ENCODE measurements at regions of chr2 and their contacts with region 1.

Region 1: DNA sequence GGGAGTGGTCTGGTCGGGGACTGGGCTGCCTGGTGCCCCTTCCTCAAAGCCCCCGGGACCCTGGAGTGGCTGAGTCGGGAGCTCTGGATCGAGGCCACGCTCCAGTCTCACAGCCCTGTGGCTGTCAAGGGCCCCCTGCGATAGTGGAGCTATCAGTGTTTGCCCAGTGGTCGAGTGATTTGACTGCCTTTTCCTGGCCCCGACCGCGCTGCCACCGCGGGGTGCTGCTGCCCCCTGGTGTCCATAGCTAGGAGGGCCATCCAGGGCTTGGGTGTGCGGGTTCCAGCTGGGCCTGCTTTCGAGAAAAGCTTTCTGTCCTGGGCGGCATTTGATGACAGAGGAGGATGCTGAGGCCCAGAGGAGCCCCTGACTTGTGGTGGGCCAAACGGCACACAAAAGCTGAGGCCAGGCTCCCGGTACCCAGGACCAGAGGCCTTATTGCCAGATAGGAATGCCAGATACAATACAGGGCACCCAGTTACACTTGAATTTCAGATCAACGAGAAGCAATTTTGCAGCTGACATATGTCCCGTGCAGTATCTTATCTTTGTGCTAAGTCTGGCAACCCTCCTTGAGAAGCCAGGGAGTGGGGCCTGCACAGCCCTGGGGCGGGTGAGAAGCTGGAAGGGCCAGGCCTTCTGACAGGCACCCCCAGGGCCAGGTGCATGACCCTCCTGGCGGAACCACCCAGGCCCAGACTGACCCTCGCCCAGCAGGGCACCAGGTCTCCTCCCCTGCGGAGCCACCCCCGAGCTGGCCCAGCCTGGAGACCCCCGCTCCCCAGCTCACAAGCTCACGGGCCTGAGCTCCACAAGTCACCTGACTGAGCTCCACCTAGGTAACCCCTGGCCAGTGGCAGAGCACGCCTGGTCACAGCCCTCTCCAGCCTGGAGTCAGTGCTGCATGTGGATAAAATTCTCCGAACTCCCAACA is 13.0 kb downstream of the ODC1 start:
- DNase-seq: peak; percentile 78
- ATAC-seq: peak; percentile 87
- H3K4me3 Mint-ChIP-seq: no peak overlapping the region
- H3K27ac Mint-ChIP-seq: no peak overlapping the region
- H3K4me1 Mint-ChIP-seq: peaks cover 15% of the 10 kb centered on the region
- H3K27me3 Mint-ChIP-seq: peaks cover 4% of the 10 kb centered on the region
- CTCF ChIP-seq: peak; percentile 45

Region 2: GRCh38 chr2:9984217-9984739 is 450.9 kb before region 1 on chr2:
- CTCF ChIA-PET with region 1: interaction called, 10 read pairs
- POLR2A ChIA-PET with region 1: no interaction called
- intact Hi-C with region 1: no loop called
- DNase-seq: no peak
- ATAC-seq: peak; percentile 86
- H3K4me3 Mint-ChIP-seq: no peak overlapping the region
- H3K27ac Mint-ChIP-seq: no peak overlapping the region
- H3K4me1 Mint-ChIP-seq: peaks cover 6% of the 10 kb centered on the region
- H3K27me3 Mint-ChIP-seq: peaks cover 16% of the 10 kb centered on the region
- CTCF ChIP-seq: no peak

Region 3: GRCh38 chr2:10097352-10098148 is 337.6 kb before region 1 on chr2:
- CTCF ChIA-PET with region 1: interaction called, 11 read pairs
- POLR2A ChIA-PET with region 1: no interaction called
- intact Hi-C with region 1: no loop called
- DNase-seq: peak; percentile 25
- ATAC-seq: peak; percentile 81
- H3K4me3 Mint-ChIP-seq: no peak overlapping the region
- H3K27ac Mint-ChIP-seq: no peak overlapping the region
- H3K4me1 Mint-ChIP-seq: peaks cover 2% of the 10 kb centered on the region
- H3K27me3 Mint-ChIP-seq: peaks cover 14% of the 10 kb centered on the region
- CTCF ChIP-seq: peak; percentile 16

Region 4: GRCh38 chr2:10141736-10142642 is 293.2 kb before region 1 on chr2:
- CTCF ChIA-PET with region 1: interaction called, 39 read pairs
- POLR2A ChIA-PET with region 1: interaction called, 4 read pairs
- intact Hi-C with region 1: loop called (anchors 1 kb)
- DNase-seq: peak; percentile 28
- ATAC-seq: peak; percentile 84
- H3K4me3 Mint-ChIP-seq: no peak overlapping the region
- H3K27ac Mint-ChIP-seq: no peak overlapping the region
- H3K4me1 Mint-ChIP-seq: no peaks in the 10 kb centered on the region
- H3K27me3 Mint-ChIP-seq: no peaks in the 10 kb centered on the region
- CTCF ChIP-seq: no peak

Region 5: DNA sequence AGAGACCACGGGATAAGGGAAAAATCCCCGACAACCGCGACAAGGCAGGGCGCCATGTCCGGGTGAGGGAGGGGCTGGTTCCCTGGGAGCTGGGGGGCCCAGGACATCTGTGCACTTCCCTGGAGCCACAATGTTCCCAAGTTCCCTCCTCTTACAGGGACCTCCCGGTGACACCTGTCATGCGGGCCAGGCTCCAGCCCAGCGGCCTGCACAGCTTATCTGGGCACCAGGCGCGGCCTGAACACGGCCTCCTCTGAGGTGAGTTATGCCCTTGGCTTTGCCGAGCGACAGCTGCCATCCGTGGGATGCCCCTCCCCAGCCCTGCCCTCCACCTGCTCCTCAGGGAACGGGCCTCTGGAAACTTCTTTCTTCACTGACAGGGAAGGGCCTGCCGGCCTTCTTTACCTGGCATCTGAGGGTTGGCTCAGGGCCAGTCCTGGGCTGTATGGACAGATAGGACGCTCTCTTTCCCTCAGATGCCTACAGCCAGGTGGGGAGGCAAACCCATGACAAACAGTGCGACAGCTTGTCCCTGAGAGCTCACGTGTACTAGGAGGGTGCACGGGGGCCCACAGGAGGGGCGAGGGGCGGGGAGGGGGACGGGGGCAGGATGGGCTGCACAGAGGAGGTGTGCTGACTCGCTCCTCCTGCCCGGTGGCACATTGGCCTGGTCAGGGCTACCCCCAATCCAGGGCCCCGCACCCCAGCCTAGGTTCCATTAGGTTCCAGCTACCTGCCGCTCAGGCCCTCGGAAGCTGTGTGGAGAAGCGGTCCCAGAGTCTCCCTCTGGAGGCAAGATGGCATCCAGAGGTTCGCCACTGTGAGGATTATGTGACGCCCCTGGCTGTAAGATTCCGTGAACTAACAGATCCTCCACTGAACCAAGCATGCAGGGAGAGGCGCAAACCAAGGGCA is 167.3 kb before region 1 on chr2:
- CTCF ChIA-PET with region 1: interaction called, 41 read pairs
- POLR2A ChIA-PET with region 1: no interaction called
- intact Hi-C with region 1: loop called (anchors 1 kb)
- DNase-seq: no peak
- ATAC-seq: no peak
- H3K4me3 Mint-ChIP-seq: no peak overlapping the region
- H3K27ac Mint-ChIP-seq: no peak overlapping the region
- H3K4me1 Mint-ChIP-seq: peaks cover 6% of the 10 kb centered on the region
- H3K27me3 Mint-ChIP-seq: no peaks in the 10 kb centered on the region
- CTCF ChIP-seq: no peak